ENCODE measurements at regions of chr16 and their contacts with region 1.

Region 1: DNA sequence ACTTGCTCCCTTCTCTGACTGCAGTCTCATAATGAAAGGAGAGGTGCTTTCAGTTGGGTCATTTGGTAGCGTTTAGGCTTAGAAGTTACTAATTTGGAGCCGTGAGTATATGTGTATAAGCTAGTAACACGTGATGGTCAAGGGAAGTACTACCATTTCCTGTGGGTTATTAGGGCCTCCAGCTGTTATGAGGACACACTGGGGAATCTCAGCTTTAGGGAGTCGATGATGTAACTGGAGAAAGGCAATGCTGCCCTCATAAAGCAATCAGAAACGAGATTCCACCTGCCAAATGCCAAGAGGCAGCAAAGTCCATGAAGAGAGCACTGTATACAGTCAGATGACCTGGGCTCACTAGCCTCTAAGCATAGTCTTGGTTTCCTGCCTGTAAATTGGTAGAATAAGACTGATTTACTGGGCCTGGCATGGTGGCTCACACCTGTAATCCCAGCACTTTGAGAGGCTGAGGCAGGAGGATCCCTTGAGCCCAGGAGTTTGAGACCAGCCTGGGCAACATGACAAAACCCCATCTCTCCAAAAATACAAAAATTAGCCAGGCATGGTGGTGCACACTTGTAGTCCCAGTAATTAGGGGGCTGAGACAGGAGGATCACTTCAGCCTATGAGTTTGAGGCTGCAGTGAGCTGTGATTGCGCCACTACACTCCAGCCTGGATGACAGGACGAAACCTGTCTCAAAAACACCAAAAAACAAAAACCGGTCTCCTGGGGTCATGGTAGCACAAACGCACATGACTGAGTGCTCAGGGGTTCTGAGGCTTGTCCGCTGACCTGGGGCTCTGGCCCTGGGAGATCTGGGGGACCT is 53.0 kb downstream of the SF3B3 start:
- DNase-seq: no peak
- H3K4me3 Mint-ChIP-seq: no peak overlapping the region
- H3K27ac Mint-ChIP-seq: no peak overlapping the region
- H3K4me1 Mint-ChIP-seq: peaks cover 9% of the 10 kb centered on the region
- H3K27me3 Mint-ChIP-seq: no peaks in the 10 kb centered on the region

Region 2: GRCh38 chr16:70478912-70479341 is 97.7 kb before region 1 on chr16:
- CTCF ChIA-PET with region 1: no interaction called
- POLR2A ChIA-PET with region 1: no interaction called
- DNase-seq: no peak
- H3K4me3 Mint-ChIP-seq: no peak overlapping the region
- H3K27ac Mint-ChIP-seq: no peak overlapping the region
- H3K4me1 Mint-ChIP-seq: peaks cover 21% of the 10 kb centered on the region
- H3K27me3 Mint-ChIP-seq: no peaks in the 10 kb centered on the region

Region 3: DNA sequence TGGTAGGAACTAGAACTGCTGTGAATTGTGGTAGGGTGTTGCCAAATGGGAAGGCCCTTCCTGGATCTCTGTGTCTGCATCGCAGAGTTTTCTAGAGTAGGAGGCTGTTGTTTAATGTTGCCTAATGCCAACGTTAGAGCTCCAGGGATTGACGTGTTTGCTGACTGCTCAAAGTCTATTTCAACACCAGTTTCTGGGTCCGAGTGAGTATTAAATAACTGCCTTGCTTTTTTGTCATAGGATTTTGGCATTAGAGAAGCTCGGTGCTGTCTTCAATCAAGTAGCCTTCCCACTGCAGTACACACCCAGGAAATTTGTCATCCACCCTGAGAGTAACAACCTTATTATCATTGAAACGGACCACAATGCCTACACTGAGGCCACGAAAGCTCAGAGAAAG is 13.0 kb before region 1 on chr16:
- CTCF ChIA-PET with region 1: interaction called, 14 read pairs
- POLR2A ChIA-PET with region 1: no interaction called
- DNase-seq: no peak
- H3K4me3 Mint-ChIP-seq: no peak overlapping the region
- H3K27ac Mint-ChIP-seq: no peak overlapping the region
- H3K4me1 Mint-ChIP-seq: no peaks in the 10 kb centered on the region
- H3K27me3 Mint-ChIP-seq: no peaks in the 10 kb centered on the region

Measured in activated CD4-positive, alpha-beta T cell treated with anti-CD3 and anti-CD28 coated beads, Interleukin-2, amount 10 ng/mL, durations not matched to agents 7 days and 5 days (primary cell).